Heart right ventricle (tissue), 16 donors: ENCODE measurements at regions of chr12 and their contacts with region 1.

Region 1: DNA sequence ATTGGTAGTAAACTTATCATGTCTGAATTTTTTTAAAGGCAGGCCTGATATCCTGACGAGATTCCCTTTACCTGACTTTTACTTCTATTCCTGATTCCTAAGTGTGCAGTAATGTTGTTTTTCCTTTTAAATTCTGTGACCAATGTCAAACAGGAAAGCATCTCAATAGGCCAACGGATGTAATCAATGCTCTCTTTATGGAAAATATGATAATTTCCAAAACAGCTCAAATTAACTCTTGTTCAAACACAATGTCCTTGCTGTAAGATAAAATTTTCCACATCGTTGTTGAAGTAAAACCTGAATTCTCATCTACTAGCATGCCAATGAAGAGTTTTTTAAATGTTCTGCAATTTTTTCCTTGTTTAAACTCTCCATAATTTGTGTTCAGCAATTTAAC is 8.0 kb upstream of the TAS2R31 start:
- DNase-seq: no peak
- ATAC-seq: no peak
- H3K4me3 ChIP-seq: no peak overlapping the region
- H3K27ac ChIP-seq: no peak overlapping the region
- H3K4me1 ChIP-seq: no peaks in the 10 kb centered on the region
- H3K27me3 ChIP-seq: no peaks in the 10 kb centered on the region
- CTCF ChIP-seq: no peak

Region 2: DNA sequence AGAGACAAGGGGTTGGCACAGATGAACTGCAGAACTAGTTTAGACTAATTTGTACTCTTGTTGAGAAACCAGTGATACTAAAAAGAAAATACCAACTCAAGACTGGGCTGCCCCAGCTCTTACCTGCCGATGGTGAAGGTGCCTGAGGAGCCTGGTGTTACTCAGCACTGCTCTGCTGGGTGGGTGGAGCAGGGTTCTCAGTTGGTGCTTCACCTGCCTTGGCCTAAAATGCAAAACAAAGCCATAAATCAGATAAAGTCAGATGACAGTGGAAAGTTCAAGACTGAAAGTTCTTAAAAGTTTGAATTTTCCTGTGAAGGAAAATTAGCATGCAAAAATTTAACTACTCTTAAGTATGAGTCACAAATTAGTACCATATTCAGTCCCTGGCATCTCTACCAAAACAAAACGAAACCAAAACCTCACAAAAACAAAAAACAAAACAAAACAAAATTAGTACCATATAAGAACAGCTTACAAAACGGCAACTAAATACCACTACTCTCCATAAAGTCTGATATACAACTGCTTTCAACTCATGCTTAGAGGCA is 338.0 kb before region 1 on chr12:
- intact Hi-C with region 1: no loop called
- DNase-seq: no peak
- ATAC-seq: no peak
- H3K4me3 ChIP-seq: no peak overlapping the region
- H3K27ac ChIP-seq: no peak overlapping the region
- H3K4me1 ChIP-seq: peaks cover 0 to 27% (median 17%) of the 10 kb centered on the region in 9 donors
- H3K27me3 ChIP-seq: no peaks in the 10 kb centered on the region
- CTCF ChIP-seq: no peak

Region 3: GRCh38 chr12:10726940-10727339 is 312.2 kb before region 1 on chr12:
- intact Hi-C with region 1: no loop called
- DNase-seq: no peak
- ATAC-seq: no peak
- H3K4me3 ChIP-seq: no peak overlapping the region
- H3K27ac ChIP-seq: no peak overlapping the region
- H3K4me1 ChIP-seq: peaks cover 0 to 10% (median 9%) of the 10 kb centered on the region in 9 donors
- H3K27me3 ChIP-seq: peaks cover 0 to 18% (median 0%) of the 10 kb centered on the region in 7 donors
- CTCF ChIP-seq: no peak

Region 4: DNA sequence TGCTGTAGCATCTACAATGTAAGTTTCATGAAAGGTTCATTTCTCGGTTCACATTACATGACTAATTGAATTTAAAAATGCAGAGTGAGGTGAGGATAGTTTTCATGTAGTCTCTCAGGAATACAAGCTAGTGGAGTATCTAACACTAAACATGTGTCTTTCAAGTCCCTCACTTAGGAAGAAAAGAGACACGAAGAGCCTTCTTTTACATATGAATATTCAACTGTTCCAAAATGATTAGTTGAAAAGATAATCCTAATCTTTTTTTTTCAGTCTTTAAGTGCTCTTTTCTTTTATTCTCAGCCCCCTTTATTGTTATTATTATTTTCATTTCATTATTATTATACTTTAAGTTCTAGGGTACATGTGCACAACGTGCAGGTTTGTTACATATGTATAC is 200.7 kb before region 1 on chr12:
- intact Hi-C with region 1: no loop called
- DNase-seq: no peak
- ATAC-seq: no peak
- H3K4me3 ChIP-seq: no peak overlapping the region
- H3K27ac ChIP-seq: no peak overlapping the region
- H3K4me1 ChIP-seq: no peaks in the 10 kb centered on the region
- H3K27me3 ChIP-seq: no peaks in the 10 kb centered on the region
- CTCF ChIP-seq: no peak

Region 5: GRCh38 chr12:11085419-11085818 is 46.2 kb after region 1 on chr12:
- intact Hi-C with region 1: loop called in 1 of 10 experiments (anchors 5 kb)
- DNase-seq: no peak
- ATAC-seq: no peak
- H3K4me3 ChIP-seq: no peak overlapping the region
- H3K27ac ChIP-seq: no peak overlapping the region
- H3K4me1 ChIP-seq: peaks cover 0 to 5% (median 0%) of the 10 kb centered on the region in 9 donors
- H3K27me3 ChIP-seq: no peaks in the 10 kb centered on the region
- CTCF ChIP-seq: no peak

Region 6: DNA sequence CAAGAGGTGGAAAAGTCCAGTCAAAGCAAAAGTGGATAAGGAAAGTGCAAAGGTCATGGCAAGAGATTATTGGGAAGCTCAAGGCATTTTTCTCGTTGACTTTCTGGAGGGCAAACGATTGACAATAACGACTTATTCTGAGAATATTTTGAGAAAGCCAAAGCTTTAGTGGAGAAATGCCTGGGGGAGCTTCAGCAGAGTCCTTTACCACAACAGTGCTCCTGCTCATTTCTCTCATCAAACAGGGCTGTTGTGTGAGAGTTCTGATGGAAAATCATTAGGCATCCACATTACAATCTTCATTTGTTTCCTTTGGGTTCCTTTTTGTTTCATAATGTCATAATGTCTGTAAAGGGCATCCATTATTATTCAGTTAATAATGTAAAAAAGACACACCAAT is 203.5 kb after region 1 on chr12:
- intact Hi-C with region 1: no loop called
- DNase-seq: no peak
- ATAC-seq: no peak
- H3K4me3 ChIP-seq: no peak overlapping the region
- H3K27ac ChIP-seq: no peak overlapping the region
- H3K4me1 ChIP-seq: no peaks in the 10 kb centered on the region
- H3K27me3 ChIP-seq: no peaks in the 10 kb centered on the region
- CTCF ChIP-seq: no peak